ENCODE measurements at regions of chr15 and their contacts with region 1.

Region 1: DNA sequence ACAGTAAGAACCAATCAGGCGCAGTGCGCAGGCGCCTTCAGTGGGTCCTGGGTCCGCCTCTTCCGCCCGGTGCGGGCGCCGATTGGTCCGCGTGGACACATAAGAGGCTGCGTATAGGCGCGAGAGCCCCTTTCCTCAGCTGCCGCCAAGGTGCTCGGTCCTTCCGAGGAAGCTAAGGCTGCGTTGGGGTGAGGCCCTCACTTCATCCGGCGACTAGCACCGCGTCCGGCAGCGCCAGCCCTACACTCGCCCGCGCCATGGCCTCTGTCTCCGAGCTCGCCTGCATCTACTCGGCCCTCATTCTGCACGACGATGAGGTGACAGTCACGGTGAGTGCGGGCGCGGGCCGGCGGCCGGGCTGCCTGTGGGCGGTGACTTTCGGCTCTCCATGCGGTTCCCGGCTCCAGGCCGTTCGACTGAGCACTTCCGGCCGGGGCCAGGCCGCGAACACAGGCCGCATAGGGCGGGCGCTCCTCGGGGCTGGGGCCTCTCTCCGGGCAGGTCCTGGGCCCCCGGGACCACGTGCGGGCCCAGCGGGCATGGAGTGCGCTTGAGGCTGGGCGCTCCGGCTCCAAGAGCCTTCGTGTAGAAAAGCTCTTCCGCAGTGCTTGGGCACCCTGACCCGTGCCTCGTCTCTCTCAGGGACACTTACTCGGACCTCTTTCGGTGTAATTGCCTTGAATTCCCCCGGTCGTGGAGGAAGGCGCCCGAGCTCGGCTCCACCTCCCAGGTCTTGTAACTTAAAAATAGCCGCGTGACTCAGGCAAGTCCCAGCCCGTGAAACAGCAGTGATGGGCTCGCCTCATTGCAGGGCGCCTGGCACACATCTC is at the start of gene RPLP1:
- DNase-seq: peak; percentile 98 to 99
- ATAC-seq: peak; percentile 99
- H3K4me3 ChIP-seq: peak within 1 kb of the TSS; percentile 73 to 95
- H3K27ac ChIP-seq: peak within 1 kb of the TSS; percentile 62 to 84
- H3K4me1 ChIP-seq: peaks cover 0 to 2% of the 10 kb centered on the region in 2 donors
- H3K27me3 ChIP-seq: no peaks in the 10 kb centered on the region
- total RNA-seq, gene RPLP1: 1,445 to 1,646 TPM

Region 2: GRCh38 chr15:69413822-69414700 is 38.8 kb before region 1 on chr15 and contains the start of gene KIF23:
- intact Hi-C with region 1: loop called (anchors 2 kb)
- DNase-seq: peak; percentile 94 to 97
- ATAC-seq: peak; percentile 95
- H3K4me3 ChIP-seq: peak within 1 kb of the TSS; percentile 80 to 82
- H3K27ac ChIP-seq: peak within 1 kb of the TSS; percentile 91 to 97
- H3K4me1 ChIP-seq: peaks cover 2 to 8% of the 10 kb centered on the region in 2 donors
- H3K27me3 ChIP-seq: no peaks in the 10 kb centered on the region
- total RNA-seq, gene KIF23: 3.3 to 5.8 TPM

Region 3: DNA sequence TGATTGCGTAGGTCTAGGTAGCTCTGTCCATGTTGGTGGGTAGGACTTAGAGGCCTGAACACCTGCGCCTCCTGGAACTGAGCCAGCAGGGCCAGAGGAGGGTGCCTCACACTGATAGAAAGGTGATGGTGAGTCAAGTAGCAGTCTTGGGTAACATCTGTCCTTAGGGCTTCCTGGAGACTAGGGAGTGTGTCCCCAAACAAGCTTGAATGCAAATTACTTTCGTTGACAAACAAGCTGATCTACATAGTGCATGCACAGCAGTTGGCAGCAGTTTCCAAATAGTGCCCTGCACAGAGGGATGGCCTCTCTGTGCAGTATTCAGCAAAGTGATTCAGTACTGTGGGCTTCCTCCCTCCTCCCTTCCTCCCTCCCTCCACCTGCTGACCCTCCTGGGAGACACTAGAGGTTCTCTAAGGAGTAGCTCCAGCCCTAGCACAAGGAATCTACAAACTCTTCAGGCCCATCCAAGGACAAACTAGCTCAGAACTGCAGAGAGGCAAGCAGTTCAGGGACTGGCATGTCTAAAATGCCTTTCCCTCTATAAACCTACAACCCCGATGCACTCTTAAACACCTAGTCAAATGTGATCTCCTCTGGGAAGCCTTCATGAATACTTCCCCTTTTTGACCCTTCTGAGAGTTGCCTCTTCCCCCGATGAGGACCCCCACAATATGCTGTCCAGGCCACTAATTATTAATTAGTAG is 583.8 kb after region 1 on chr15:
- intact Hi-C with region 1: no loop called
- DNase-seq: no peak
- ATAC-seq: no peak
- H3K4me3 ChIP-seq: no peak overlapping the region
- H3K27ac ChIP-seq: no peak overlapping the region
- H3K4me1 ChIP-seq: no peaks in the 10 kb centered on the region
- H3K27me3 ChIP-seq: no peaks in the 10 kb centered on the region

Measured in aorta (tissue), 5 donors.